Transverse colon (tissue), 4 donors: ENCODE measurements at regions of chr12 and their contacts with region 1.

Region 1: DNA sequence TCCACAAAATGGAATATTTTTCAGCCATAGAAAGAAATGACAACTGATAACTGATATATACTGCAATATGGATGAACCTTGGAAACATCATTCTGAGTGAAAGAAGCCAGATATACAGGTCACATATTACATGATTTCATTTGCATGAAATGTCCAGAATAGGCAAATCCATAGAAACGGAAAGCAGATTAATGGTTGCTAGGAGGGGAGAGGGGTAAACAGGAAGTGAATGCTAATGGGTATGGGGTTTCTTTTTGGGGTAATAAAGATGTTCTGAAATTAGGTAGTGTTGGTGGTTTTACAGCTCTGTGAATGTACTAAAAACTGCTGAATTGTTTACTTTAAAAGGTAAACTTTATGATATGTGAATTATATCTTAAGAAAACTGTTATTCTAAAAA is 6.5 kb downstream of the RAD51AP1 start:
- DNase-seq: no peak
- H3K4me3 ChIP-seq: no peak overlapping the region
- H3K27ac ChIP-seq: no peak overlapping the region
- H3K4me1 ChIP-seq: no peaks in the 10 kb centered on the region
- H3K27me3 ChIP-seq: no peaks in the 10 kb centered on the region
- CTCF ChIP-seq: no peak
- EP300 ChIP-seq: no peak
- POLR2A ChIP-seq: no peak

Region 2: GRCh38 chr12:4379405-4379804 is 165.8 kb before region 1 on chr12 and contains the start of gene FGF23:
- in situ Hi-C with region 1: no loop called
- intact Hi-C with region 1: no loop called
- DNase-seq: no peak
- H3K4me3 ChIP-seq: no peak within 1 kb of the TSS
- H3K27ac ChIP-seq: no peak within 1 kb of the TSS
- H3K4me1 ChIP-seq: no peaks in the 10 kb centered on the region
- H3K27me3 ChIP-seq: no peaks in the 10 kb centered on the region
- CTCF ChIP-seq: no peak
- EP300 ChIP-seq: no peak
- POLR2A ChIP-seq: no peak
- total RNA-seq, gene FGF23: not detected

Region 3: DNA sequence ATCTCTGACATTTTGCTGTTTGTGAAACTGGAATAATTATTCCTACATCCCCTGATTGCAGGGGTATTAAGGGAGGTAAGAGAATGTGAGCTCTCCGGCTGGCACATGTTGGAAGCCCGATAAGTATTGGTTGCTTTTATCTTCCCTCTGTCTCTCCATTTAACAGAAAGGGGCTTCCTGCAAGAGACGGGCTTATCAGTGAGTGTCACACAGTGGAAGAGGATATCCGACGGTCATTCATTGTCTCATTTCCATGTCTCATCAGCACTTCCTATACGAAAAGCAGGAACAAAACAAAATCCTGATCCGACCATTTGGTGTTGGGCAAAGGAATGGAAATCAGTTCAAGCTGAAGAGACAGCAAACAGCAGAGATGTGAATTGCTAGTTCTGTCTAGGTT is 27.5 kb after region 1 on chr12:
- in situ Hi-C with region 1: no loop called
- intact Hi-C with region 1: loop called (anchors 1 kb)
- DNase-seq: no peak
- H3K4me3 ChIP-seq: no peak overlapping the region
- H3K27ac ChIP-seq: no peak overlapping the region
- H3K4me1 ChIP-seq: no peaks in the 10 kb centered on the region
- H3K27me3 ChIP-seq: peaks cover 3% of the 10 kb centered on the region
- CTCF ChIP-seq: no peak
- EP300 ChIP-seq: no peak
- POLR2A ChIP-seq: no peak

Region 4: GRCh38 chr12:4615667-4616066 is 70.5 kb after region 1 on chr12:
- in situ Hi-C with region 1: no loop called
- intact Hi-C with region 1: no loop called
- DNase-seq: no peak
- H3K4me3 ChIP-seq: no peak overlapping the region
- H3K27ac ChIP-seq: no peak overlapping the region
- H3K4me1 ChIP-seq: no peaks in the 10 kb centered on the region
- H3K27me3 ChIP-seq: no peaks in the 10 kb centered on the region
- CTCF ChIP-seq: no peak
- EP300 ChIP-seq: no peak
- POLR2A ChIP-seq: no peak